Activated T-helper 1 cell treated with anti-CD3 and anti-CD28 coated beads, Interleukin-12 subunit alpha, Interleukin-12 subunit beta, Interleukin-2, Interleukin-4 antibody, amounts not matched to agents 30 ng/mL and 10 ng/mL and 1 ng/mL, durations not matched to agents 14 hours and 24 hours and 36 hours (primary cell): ENCODE measurements at regions of chr3 and their contacts with region 1.

Region 1: DNA sequence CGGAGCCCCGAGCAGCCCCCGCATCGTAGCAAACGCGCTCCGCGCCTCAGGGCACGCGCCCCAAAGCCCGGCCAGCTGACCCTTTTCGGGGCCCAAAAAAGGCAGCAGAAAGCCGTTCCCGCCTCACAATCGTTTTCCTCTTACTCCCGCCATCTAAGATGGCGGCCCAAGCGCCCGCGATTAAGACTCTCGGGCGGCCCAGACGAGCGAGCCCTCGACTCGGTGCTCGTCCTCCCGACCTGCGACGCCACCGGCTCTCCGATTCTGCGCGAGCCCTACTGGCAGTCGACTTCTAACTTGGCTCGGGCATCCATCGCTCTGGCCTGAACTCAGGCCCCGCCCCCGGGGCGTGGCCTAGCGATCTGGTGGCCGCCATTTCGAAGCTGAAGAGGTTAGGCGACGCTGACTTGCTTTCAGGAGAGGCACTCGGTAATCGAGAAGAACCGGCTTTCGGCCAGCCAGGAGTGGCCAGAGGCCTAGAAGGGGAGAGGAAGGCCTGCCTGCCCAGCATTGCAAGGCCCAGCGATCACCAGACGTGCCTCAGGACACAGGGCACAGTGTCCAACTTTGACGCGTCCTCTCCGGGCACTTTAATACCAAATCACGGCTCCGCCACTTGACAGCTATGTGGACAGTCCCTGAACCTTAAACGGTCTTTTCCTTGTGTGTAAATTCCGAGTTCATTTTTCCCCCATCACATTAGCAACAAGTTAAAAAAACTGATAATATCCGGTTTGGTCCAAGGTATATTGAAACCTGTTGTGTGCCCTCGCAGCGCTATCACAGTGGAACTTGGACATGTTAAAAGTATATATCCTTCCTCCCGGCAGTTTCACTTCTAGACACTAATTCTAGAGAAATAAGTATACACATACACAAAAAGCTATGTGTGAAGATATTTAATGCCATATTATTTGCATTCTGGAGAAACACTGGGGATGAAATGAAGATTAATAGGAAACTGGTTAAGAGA is at the start of gene RAF1:
- DNase-seq: peak; percentile 97
- H3K4me3 Mint-ChIP-seq: peak within 1 kb of the TSS; percentile 86
- H3K27ac Mint-ChIP-seq: peak within 1 kb of the TSS; percentile 99
- H3K4me1 Mint-ChIP-seq: peaks cover 30% of the 10 kb centered on the region
- H3K27me3 Mint-ChIP-seq: no peaks in the 10 kb centered on the region
- total RNA-seq, gene RAF1: 91.0 and 91.6 TPM in 2 replicates

Region 2: GRCh38 chr3:11770477-11771391 is 893.5 kb before region 1 on chr3:
- intact Hi-C with region 1: loop called (anchors 5 kb)
- DNase-seq: peak; percentile 82
- H3K4me3 Mint-ChIP-seq: peak overlapping the region; percentile 21
- H3K27ac Mint-ChIP-seq: peak overlapping the region; percentile 82
- H3K4me1 Mint-ChIP-seq: peaks cover 20% of the 10 kb centered on the region
- H3K27me3 Mint-ChIP-seq: no peaks in the 10 kb centered on the region

Region 3: GRCh38 chr3:12155823-12156222 is 508.4 kb before region 1 on chr3:
- intact Hi-C with region 1: no loop called
- DNase-seq: no peak
- H3K4me3 Mint-ChIP-seq: no peak overlapping the region
- H3K27ac Mint-ChIP-seq: no peak overlapping the region
- H3K4me1 Mint-ChIP-seq: peaks cover 12% of the 10 kb centered on the region
- H3K27me3 Mint-ChIP-seq: peaks cover 25% of the 10 kb centered on the region

Region 4: DNA sequence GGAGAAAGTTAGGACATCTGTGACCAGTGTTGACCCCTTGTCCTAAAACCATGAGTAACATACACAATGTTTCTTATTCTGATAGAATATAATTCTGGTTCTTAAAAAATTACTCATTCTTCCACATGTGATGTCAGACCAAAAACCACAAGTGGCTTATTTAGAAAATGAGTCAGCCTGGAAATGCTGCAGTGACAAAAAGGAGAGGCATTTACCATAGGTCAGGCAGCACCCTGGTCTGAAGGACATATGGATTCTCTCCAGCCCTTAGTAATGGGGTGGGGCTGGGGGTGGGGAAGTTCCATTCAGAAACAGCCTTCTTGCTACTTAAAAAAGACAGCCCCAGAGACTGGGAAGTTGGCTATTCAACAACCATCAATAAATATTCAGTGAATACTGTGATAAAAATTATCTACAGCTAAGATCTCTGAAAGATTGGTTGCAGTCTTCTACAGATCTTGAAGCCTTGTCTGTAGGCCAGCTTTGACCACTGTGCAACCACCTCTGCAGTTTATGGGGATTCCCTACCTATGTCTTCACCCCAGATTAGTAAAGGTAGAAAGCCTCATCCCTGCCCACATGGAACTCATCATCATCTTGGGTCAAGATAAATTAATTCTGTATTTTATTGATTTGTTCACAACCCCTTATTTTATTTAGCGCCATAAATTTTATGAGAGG is 470.6 kb before region 1 on chr3:
- intact Hi-C with region 1: loop called (anchors 5 kb)
- DNase-seq: no peak
- H3K4me3 Mint-ChIP-seq: peak overlapping the region; percentile 52
- H3K27ac Mint-ChIP-seq: peak overlapping the region; percentile 93
- H3K4me1 Mint-ChIP-seq: peaks cover 77% of the 10 kb centered on the region
- H3K27me3 Mint-ChIP-seq: no peaks in the 10 kb centered on the region

Region 5: GRCh38 chr3:12601072-12601471 is 63.1 kb before region 1 on chr3:
- intact Hi-C with region 1: loop called (anchors 2 kb)
- DNase-seq: no peak
- H3K4me3 Mint-ChIP-seq: no peak overlapping the region
- H3K27ac Mint-ChIP-seq: no peak overlapping the region
- H3K4me1 Mint-ChIP-seq: no peaks in the 10 kb centered on the region
- H3K27me3 Mint-ChIP-seq: no peaks in the 10 kb centered on the region

Region 6: DNA sequence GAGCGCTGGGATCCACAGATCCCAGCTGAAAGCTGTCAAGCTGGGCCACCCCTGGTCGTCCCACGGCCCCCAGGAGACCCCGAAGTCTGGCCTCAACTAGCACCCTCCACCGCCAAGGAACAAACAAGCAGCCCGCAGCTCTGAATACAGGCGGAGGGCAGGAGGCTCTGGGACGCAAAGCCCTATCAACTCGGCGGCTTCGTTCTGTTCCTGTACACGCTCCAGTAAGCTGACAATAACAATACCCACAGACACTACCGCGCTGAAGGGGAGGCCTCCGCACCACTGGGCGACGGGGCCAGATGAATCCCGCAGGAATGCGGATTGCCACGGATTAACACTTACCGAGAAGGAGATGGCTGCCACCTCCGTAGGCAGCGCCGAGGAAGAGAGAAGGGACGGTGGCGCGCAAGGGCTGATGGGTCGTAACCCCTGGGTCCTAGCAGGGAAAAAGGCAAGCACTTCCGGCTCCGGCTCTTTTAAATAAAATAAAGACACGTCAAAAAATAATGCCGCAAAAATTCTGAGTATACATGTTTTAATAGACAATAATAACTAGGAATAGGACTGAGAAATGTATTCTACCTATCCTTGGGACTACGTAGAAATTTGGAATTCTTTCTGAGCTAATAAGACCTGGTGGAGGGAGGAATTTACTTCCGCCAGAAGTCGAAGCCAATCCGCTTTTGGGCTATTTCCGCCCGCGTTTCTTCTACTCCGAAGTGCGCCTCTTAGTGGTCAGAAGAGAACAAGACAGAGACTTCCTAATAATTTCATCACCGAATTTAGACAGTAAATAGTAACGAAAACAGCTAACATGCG is 177.1 kb after region 1 on chr3 and contains the start of gene RPL32:
- intact Hi-C with region 1: loop called (anchors 1 kb)
- DNase-seq: peak; percentile 78
- H3K4me3 Mint-ChIP-seq: peak within 1 kb of the TSS; percentile 97
- H3K27ac Mint-ChIP-seq: peak within 1 kb of the TSS; percentile 99
- H3K4me1 Mint-ChIP-seq: peaks cover 39% of the 10 kb centered on the region
- H3K27me3 Mint-ChIP-seq: peaks cover 2% of the 10 kb centered on the region
- total RNA-seq, gene RPL32: 1,952 and 1,970 TPM in 2 replicates

Region 7: DNA sequence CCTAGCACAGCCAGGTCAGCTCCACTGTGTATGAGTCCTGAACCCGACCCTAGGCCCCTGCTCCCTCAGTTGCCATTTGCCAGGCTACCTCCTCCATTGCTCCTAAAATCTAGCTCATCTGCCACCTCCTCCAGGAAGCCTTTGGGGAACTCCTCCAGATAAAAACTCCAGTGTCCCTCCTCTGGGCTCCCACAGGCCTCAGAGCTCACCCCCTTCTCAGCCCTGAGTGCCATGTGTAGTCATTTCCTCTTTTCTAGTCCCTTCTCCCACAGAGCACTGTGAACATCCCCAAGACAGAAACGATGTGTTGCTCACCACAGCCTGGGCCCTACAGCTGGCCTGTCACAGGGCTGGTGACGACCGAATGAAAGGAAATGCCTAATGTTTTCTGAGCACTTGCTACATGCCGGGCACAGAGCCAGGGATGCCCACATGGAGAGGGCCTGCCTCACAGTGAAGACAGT is 348.0 kb after region 1 on chr3:
- intact Hi-C with region 1: no loop called
- DNase-seq: peak; percentile 43
- H3K4me3 Mint-ChIP-seq: peak overlapping the region; percentile 80
- H3K27ac Mint-ChIP-seq: peak overlapping the region; percentile 99
- H3K4me1 Mint-ChIP-seq: peaks cover 85% of the 10 kb centered on the region
- H3K27me3 Mint-ChIP-seq: no peaks in the 10 kb centered on the region

Region 8: GRCh38 chr3:13419505-13420044 is 755.4 kb after region 1 on chr3:
- intact Hi-C with region 1: loop called (anchors 5 kb)
- DNase-seq: peak; percentile 56
- H3K4me3 Mint-ChIP-seq: peak overlapping the region; percentile 88
- H3K27ac Mint-ChIP-seq: peak overlapping the region; percentile 92
- H3K4me1 Mint-ChIP-seq: peaks cover 71% of the 10 kb centered on the region
- H3K27me3 Mint-ChIP-seq: no peaks in the 10 kb centered on the region